K562 (cell line): ENCODE measurements at regions of chr6 and their contacts with region 1.

Region 1: DNA sequence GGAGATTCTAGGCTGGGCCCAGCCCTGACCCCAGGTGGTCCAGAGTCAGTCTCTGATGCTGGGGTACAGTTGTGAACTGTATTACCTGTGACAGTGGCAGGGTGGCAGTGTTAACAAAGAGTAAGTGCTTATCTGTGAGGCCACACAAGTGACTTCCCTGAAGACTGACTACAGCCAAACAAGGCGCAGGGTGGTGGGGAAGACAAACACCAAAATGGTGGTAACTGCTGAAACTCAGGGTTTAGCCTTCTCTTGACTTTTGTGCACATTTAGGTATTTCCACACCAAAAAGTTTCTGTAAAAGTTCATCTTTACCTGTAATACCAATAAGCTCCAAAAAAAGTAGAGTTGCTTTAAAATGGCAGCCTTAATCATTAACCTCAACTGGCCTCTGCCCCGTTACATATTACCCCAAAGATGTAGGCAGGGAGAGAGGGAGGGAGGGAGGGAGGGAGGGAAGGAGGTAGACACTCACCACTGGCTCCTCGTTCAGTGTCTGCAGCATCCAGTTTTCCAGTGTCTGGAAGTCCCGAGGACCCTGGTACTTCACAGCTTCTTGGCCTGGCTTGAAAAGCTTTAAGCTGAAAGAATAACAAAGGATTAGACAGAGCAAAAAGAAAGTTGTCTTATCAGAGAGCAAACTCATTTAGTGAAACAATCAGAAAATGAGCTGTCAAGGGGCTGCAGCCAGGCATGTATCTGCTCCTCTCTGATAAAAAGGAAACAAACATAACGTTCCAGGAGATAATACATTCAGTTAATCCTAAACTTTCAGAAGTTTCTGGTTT is 11.3 kb downstream of the TXNDC5 start:
- DNase-seq: peak; percentile 42 to 83 (median 66)
- ATAC-seq: peak; percentile 87
- H3K4me3 ChIP-seq: no peak overlapping the region
- H3K27ac ChIP-seq: peak overlapping the region; percentile 66; the same call in 2 of the 3 replicates
- H3K4me1 ChIP-seq: peaks cover 5 to 34% of the 10 kb centered on the region in 2 experiments
- H3K27me3 ChIP-seq: no peaks in the 10 kb centered on the region
- CTCF ChIP-seq: peak; percentile 53 to 79 (median 56); a peak in 5 of 6 replicates
- EP300 ChIP-seq: peak; percentile 97
- POLR2A ChIP-seq: no peak
- RAD21 ChIP-seq: peak; percentile 89 to 93

Region 2: GRCh38 chr6:7827142-7827541 is 72.2 kb before region 1 on chr6:
- CTCF ChIA-PET with region 1: no interaction called
- POLR2A ChIA-PET with region 1: no interaction called
- in situ Hi-C with region 1: no loop called
- intact Hi-C with region 1: no loop called
- DNase-seq: no peak
- ATAC-seq: no peak
- H3K4me3 ChIP-seq: no peak overlapping the region
- H3K27ac ChIP-seq: no peak overlapping the region
- H3K4me1 ChIP-seq: no peaks in the 10 kb centered on the region
- H3K27me3 ChIP-seq: peaks cover 45 to 75% of the 10 kb centered on the region in 2 experiments
- CTCF ChIP-seq: no peak
- EP300 ChIP-seq: no peak
- POLR2A ChIP-seq: no peak
- RAD21 ChIP-seq: no peak

Region 3: GRCh38 chr6:7910654-7911344 is 11.5 kb after region 1 on chr6 and contains the start of gene TXNDC5:
- CTCF ChIA-PET with region 1: no interaction called
- POLR2A ChIA-PET with region 1: interaction called, 29 read pairs
- in situ Hi-C with region 1: no loop called
- intact Hi-C with region 1: no loop called
- DNase-seq: peak; percentile 87 to 97 (median 95)
- ATAC-seq: peak; percentile 89
- H3K4me3 ChIP-seq: peak within 1 kb of the TSS; percentile 75
- H3K27ac ChIP-seq: peak within 1 kb of the TSS; percentile 77
- H3K4me1 ChIP-seq: peaks cover 28 to 56% of the 10 kb centered on the region in 2 experiments
- H3K27me3 ChIP-seq: peaks cover 8 to 24% of the 10 kb centered on the region in 2 experiments; a peak in 3 of 5 replicates
- CTCF ChIP-seq: no peak
- EP300 ChIP-seq: no peak
- POLR2A ChIP-seq: peak; percentile 53; the same call in 1 of the 2 replicates
- RAD21 ChIP-seq: peak in 1 of 2 experiments; percentile 9; a peak in 1 of 4 replicates
- polyA plus RNA-seq, gene TXNDC5: 33.9 to 44.0 TPM

Region 4: GRCh38 chr6:7974938-7975763 is 75.9 kb after region 1 on chr6:
- CTCF ChIA-PET with region 1: no interaction called
- POLR2A ChIA-PET with region 1: no interaction called
- in situ Hi-C with region 1: no loop called
- intact Hi-C with region 1: loop called (anchors 1 kb)
- DNase-seq: peak; percentile 67 to 94 (median 81)
- ATAC-seq: peak; percentile 97
- H3K4me3 ChIP-seq: no peak overlapping the region
- H3K27ac ChIP-seq: no peak overlapping the region
- H3K4me1 ChIP-seq: peaks cover 7 to 20% of the 10 kb centered on the region in 2 experiments; a peak in 4 of 5 replicates
- H3K27me3 ChIP-seq: peaks cover 8 to 22% of the 10 kb centered on the region in 2 experiments
- CTCF ChIP-seq: peak in 1 of 3 experiments; percentile 6; a peak in 1 of 6 replicates
- EP300 ChIP-seq: peak; percentile 79
- POLR2A ChIP-seq: no peak
- RAD21 ChIP-seq: 0 out of 4 replicates have a peak, but pooled peaks have one; percentile 5 to 11

Region 5: GRCh38 chr6:7992002-7992815 is 92.9 kb after region 1 on chr6:
- CTCF ChIA-PET with region 1: interaction called, 11 read pairs
- POLR2A ChIA-PET with region 1: no interaction called
- in situ Hi-C with region 1: no loop called
- intact Hi-C with region 1: loop called (anchors 1 kb)
- DNase-seq: peak; percentile 43 to 64 (median 54)
- ATAC-seq: peak; percentile 85
- H3K4me3 ChIP-seq: no peak overlapping the region
- H3K27ac ChIP-seq: no peak overlapping the region
- H3K4me1 ChIP-seq: no peaks in the 10 kb centered on the region; a peak in 1 of 5 replicates
- H3K27me3 ChIP-seq: peaks cover 0 to 6% of the 10 kb centered on the region in 2 experiments
- CTCF ChIP-seq: peak; percentile 52 to 81 (median 64); a peak in 5 of 6 replicates
- EP300 ChIP-seq: no peak
- POLR2A ChIP-seq: no peak
- RAD21 ChIP-seq: peak; percentile 96 to 97

Region 6: DNA sequence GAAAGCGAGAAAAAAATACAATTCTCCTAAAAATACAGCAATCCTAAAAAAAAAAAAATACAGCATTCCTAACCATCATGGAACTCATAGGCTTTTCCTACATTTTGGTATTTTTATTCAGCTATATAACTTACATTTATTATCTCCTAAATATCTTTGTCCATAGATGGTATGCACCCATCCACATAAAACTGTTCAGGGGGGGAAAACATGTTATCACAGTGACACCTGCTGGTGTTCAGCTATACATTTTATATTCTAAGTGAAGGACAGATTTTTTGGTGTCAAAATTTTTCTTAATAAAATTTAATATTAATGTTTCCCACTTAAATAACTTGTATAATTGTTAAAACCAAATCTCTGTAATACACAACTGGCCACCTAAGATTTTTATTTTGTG is 106.9 kb after region 1 on chr6:
- CTCF ChIA-PET with region 1: interaction called, 12 read pairs
- POLR2A ChIA-PET with region 1: no interaction called
- in situ Hi-C with region 1: no loop called
- intact Hi-C with region 1: no loop called
- DNase-seq: peak; percentile 25 to 55 (median 41)
- ATAC-seq: peak; percentile 77; the same call in 2 of the 3 replicates
- H3K4me3 ChIP-seq: no peak overlapping the region
- H3K27ac ChIP-seq: no peak overlapping the region
- H3K4me1 ChIP-seq: peaks cover 0 to 2% of the 10 kb centered on the region in 2 experiments; a peak in 1 of 5 replicates
- H3K27me3 ChIP-seq: no peaks in the 10 kb centered on the region
- CTCF ChIP-seq: peak; percentile 38 to 75 (median 43); a peak in 3 of 6 replicates
- EP300 ChIP-seq: no peak
- POLR2A ChIP-seq: no peak
- RAD21 ChIP-seq: peak; percentile 82 to 88

Region 7: DNA sequence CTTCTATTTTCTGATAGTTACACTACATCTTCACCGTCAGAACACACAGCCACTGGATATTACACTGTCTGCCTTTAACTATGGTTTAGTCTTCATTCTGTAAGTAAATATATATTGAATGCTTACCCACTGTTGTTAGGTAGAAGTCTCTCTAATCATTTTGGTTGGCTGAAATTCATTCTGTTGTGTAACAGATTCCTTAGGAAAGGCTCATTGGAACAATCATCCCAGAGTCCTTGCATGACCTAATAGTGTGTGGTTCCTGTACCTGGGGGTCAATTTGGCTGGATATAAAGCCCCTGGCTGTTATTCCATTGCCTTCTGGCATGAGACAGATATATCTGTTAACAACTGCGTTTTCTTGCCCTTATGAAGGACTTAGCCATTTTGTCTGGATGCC is 155.0 kb after region 1 on chr6:
- CTCF ChIA-PET with region 1: no interaction called
- POLR2A ChIA-PET with region 1: no interaction called
- in situ Hi-C with region 1: no loop called
- intact Hi-C with region 1: no loop called
- DNase-seq: no peak
- ATAC-seq: no peak
- H3K4me3 ChIP-seq: no peak overlapping the region
- H3K27ac ChIP-seq: no peak overlapping the region
- H3K4me1 ChIP-seq: no peaks in the 10 kb centered on the region
- H3K27me3 ChIP-seq: no peaks in the 10 kb centered on the region
- CTCF ChIP-seq: no peak
- EP300 ChIP-seq: no peak
- POLR2A ChIP-seq: no peak
- RAD21 ChIP-seq: no peak

Region 8: GRCh38 chr6:8219352-8219943 is 320.2 kb after region 1 on chr6:
- CTCF ChIA-PET with region 1: interaction called, 4 read pairs
- POLR2A ChIA-PET with region 1: no interaction called
- in situ Hi-C with region 1: no loop called
- intact Hi-C with region 1: loop called (anchors 2 kb)
- DNase-seq: peak; percentile 61 to 71 (median 62)
- ATAC-seq: peak; percentile 95
- H3K4me3 ChIP-seq: no peak overlapping the region
- H3K27ac ChIP-seq: no peak overlapping the region
- H3K4me1 ChIP-seq: no peaks in the 10 kb centered on the region
- H3K27me3 ChIP-seq: peaks cover 0 to 10% of the 10 kb centered on the region in 2 experiments; a peak in 2 of 5 replicates
- CTCF ChIP-seq: peak; percentile 69 to 84 (median 69); a peak in 5 of 6 replicates
- EP300 ChIP-seq: no peak
- POLR2A ChIP-seq: no peak
- RAD21 ChIP-seq: peak; percentile 88 to 90